Posterior cingulate gyrus (tissue), 11 donors: ENCODE measurements at regions of chr9 and their contacts with region 1.

Region 1: GRCh38 chr9:35657546-35658136 is at the start of gene RMRP:
- DNase-seq: peak; percentile 88 to 100 (median 98)

Region 2: GRCh38 chr9:35489313-35490154 is 168.1 kb before region 1 on chr9 and contains the start of gene RUSC2:
- intact Hi-C with region 1: loop called (anchors 10 kb)
- DNase-seq: peak; percentile 65 to 97 (median 79)

Region 3: GRCh38 chr9:35696525-35697215 is 39.0 kb after region 1 on chr9:
- intact Hi-C with region 1: loop called (anchors 5 kb)
- DNase-seq: peak in 4 of 10 donors; percentile 35 to 90 (median 46)

Region 4: GRCh38 chr9:35814841-35815543 is 157.4 kb after region 1 on chr9 and contains the start of gene HINT2:
- intact Hi-C with region 1: loop called (anchors 5 kb)
- DNase-seq: peak; percentile 91 to 99 (median 95)